Activated CD4-positive, alpha-beta memory T cell treated with anti-CD3 and anti-CD28 coated beads, Interleukin-2, amount 10 ng/mL, durations not matched to agents 7 days and 5 days (primary cell): ENCODE measurements at regions of chr7 and their contacts with region 1.

Region 1: DNA sequence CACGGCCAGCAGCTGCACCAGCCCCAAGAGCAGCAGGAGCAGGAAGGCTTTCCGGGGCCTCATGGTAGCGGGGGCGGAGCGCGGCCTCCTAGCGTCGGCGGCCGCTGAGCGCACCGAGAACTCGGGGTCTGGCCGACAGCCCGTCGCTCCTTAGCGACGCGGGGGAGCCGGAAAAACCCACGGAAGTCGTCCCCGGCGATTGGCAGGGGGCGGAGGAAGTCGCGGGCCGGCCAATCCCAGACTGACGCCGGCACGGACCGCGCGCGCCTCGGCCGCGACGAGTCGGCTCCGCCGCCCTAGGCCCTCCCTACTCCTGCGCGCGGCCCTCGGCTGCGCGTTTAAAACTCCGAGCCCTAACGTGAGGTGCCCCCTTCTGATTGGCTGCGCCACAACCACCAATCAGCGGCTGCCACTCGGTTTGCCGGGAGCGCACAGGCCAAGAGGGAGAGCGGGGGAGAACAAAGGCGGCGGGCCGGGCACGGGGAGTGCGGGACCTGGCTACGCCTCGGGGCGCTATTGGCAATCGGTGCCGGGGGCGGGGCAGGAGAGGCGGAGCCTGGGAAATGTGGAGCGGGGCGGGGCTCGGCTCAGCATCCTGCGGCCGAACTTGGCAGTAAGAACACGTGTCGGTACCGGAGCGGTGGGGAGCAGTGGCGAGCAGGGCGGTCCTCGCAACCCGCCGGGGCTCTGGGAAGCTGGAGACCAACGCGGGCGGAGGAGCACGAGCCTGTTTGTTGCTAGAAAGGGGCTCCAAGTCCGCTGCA is at the start of gene PDIA4:
- DNase-seq: peak; percentile 100
- H3K4me3 Mint-ChIP-seq: peak within 1 kb of the TSS; percentile 89
- H3K27ac Mint-ChIP-seq: peak within 1 kb of the TSS; percentile 92
- H3K4me1 Mint-ChIP-seq: peaks cover 44% of the 10 kb centered on the region
- H3K27me3 Mint-ChIP-seq: peaks cover 3% of the 10 kb centered on the region
- total RNA-seq, gene PDIA4: 108 TPM

Region 2: DNA sequence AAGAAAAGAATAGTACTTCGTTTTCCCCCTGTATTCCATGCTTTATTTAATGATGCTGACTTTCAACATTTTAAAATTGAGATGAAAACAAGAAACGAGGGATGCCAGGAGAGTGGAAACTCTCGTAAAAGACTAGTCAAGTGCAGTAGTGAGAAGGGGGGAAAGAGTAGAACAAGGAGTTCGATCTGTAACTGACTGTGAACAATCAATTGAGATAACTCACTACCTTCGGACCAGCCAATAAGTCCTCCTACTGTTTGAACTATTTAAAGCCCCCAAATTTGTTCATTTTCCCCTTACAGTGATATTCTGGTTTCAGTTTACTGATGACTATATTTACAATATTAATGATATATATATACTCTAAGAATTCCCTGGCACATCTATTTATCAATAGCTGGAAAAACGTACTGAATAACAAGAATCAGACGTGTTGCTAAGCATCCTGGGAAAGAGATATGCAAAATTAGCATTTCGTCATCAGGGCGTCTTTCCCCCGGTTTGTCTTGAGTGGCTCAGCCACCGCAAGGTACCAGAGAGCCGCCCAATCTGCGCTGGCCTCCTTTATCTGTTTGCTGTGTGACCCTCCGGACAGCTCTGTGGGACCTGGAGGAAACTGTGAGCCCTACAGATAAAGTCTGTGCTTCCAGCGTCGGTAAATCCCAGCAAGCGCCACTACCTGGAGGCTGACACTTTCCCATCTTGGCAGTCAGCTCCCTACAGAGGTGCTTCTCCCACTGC is 41.3 kb before region 1 on chr7:
- CTCF ChIA-PET with region 1: no interaction called
- POLR2A ChIA-PET with region 1: interaction called, 12 read pairs
- DNase-seq: peak; percentile 86
- H3K4me3 Mint-ChIP-seq: peak overlapping the region; percentile 95
- H3K27ac Mint-ChIP-seq: peak overlapping the region; percentile 86
- H3K4me1 Mint-ChIP-seq: peaks cover 48% of the 10 kb centered on the region
- H3K27me3 Mint-ChIP-seq: peaks cover 31% of the 10 kb centered on the region

Region 3: DNA sequence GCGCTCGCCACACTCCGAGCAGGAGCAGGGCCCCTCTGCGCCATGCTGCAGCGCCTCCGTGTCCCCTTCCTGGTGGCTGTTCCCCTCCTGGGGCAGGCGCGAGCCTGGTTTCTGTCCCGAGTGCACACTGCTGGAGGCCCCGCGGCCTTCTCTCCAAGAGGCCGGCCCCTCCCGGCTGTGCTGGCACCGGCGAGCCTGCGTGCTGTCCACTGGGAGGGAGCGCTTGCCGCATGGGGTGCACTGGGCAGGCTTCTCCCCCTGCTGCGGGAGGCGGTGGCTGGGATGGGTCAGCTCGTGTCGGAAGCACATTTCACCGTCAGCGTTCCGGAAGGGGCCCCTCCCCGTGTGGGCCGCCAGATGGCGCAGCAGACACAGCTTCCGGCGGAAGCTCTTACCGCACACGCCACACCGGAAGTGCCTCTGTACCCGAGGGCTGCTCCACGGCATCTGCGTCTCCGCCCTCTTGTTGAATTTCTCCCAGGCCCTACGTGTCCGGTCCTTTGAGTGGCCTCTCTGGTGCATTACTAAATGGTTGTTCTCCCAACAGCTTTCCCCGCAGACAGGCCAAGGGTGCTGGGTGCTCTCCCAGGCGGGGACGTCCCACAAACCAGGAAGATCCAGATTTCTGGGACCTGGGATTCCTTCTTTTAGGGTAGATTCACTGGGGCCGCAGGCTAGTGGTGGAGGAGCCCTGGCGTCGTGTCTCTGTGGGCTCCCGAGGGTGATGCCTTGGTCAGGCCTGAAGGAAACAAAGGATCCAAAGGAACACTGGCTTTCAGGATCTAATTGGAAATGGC is 43.3 kb after region 1 on chr7:
- CTCF ChIA-PET with region 1: interaction called, 64 read pairs
- POLR2A ChIA-PET with region 1: interaction called, 34 read pairs
- DNase-seq: peak; percentile 53
- H3K4me3 Mint-ChIP-seq: no peak overlapping the region
- H3K27ac Mint-ChIP-seq: no peak overlapping the region
- H3K4me1 Mint-ChIP-seq: peaks cover 8% of the 10 kb centered on the region
- H3K27me3 Mint-ChIP-seq: no peaks in the 10 kb centered on the region